Gastrocnemius medialis (tissue), 4 donors: ENCODE measurements at regions of chr2 and their contacts with region 1.

Region 1: DNA sequence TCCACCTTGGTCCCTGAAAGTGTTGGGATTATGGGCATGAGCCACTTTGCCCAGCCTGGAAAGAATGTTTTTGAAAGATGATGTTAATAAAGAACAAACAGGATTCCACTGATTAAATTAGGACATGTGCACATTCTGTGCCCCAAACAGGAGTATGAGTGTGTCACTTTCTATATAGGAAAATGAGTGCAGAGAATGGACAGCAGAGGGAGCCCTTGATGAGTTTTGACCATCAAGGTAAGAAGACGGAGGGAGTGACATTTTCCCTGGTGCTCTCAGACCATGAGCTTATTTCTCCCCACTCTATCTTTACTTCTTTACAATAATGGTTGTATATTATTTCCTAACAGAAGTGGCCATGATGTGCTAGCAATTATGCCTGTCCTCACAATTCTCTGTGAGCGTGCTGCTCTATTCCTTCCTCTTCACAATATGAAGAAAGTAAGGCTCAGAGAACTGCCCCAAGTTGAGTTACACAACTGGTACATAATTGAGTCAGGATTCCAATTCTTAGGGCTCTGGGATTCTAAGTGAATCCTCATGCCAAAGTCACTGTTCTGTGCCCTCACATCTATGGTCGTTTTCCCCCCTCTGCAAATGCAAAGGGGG is 20.6 kb downstream of the RPL37A start:
- DNase-seq: peak; percentile 36 to 48
- ATAC-seq: peak; percentile 82 to 93
- H3K4me3 ChIP-seq: no peak overlapping the region
- H3K27ac ChIP-seq: no peak overlapping the region
- H3K4me1 ChIP-seq: peaks cover 0 to 4% of the 10 kb centered on the region in 2 donors
- H3K27me3 ChIP-seq: no peaks in the 10 kb centered on the region
- CTCF ChIP-seq: peak; percentile 69 to 79 (median 75)
- POLR2A ChIP-seq: no peak

Region 2: GRCh38 chr2:215880970-215881369 is 638.3 kb before region 1 on chr2:
- in situ Hi-C with region 1: no loop called
- intact Hi-C with region 1: no loop called
- DNase-seq: no peak
- ATAC-seq: peak in 1 of 2 donors; percentile 30
- H3K4me3 ChIP-seq: no peak overlapping the region
- H3K27ac ChIP-seq: no peak overlapping the region
- H3K4me1 ChIP-seq: peaks cover 0 to 15% of the 10 kb centered on the region in 2 donors
- H3K27me3 ChIP-seq: no peaks in the 10 kb centered on the region
- CTCF ChIP-seq: no peak
- POLR2A ChIP-seq: no peak

Region 3: DNA sequence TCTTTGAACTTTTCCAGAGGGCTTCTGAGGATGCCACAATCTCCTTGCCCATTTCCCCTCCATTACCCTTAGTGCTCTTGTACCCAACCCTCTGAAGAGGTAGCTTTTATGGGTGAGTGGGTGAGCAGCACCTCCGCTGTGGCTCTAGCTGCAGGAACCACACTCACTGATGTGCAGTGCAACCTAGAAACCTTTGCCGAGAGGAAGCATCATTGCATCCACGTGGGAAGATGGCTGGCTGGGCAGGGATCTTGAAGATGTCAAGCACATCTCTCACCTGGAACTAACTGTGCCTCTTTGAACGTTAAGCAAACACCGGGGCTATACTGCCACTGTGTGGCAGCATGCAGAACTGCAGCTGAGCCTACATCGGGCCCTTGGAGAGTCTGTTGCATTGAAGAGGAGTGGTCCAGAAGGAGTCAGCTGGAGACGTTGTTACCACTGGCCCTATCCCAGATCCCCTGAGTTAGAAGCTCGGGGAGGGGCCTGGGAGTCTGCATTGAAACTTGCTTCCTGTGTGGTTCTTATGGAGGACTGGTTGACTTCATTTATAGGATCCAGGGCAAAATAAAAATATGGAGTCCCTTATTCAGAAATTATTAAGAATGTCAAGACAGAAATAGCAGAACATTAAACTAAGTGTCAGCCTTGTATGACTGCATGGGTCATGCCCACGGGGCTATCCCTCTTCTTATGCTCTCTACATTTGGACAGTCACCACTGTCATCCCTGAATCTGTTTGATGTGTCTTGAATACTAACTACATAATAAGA is 147.4 kb after region 1 on chr2:
- in situ Hi-C with region 1: loop called (anchors 5 kb)
- intact Hi-C with region 1: loop called (anchors 1 kb)
- DNase-seq: peak in 1 of 2 donors; percentile 58
- ATAC-seq: peak; percentile 81 to 87
- H3K4me3 ChIP-seq: no peak overlapping the region
- H3K27ac ChIP-seq: no peak overlapping the region
- H3K4me1 ChIP-seq: peaks cover 0 to 4% of the 10 kb centered on the region in 2 donors
- H3K27me3 ChIP-seq: no peaks in the 10 kb centered on the region
- CTCF ChIP-seq: peak; percentile 94 to 98 (median 97)
- POLR2A ChIP-seq: no peak

Region 4: GRCh38 chr2:217729421-217730053 is 1210.3 kb after region 1 on chr2:
- in situ Hi-C with region 1: loop called in 1 of 4 experiments (anchors 25 kb)
- intact Hi-C with region 1: no loop called
- DNase-seq: no peak
- ATAC-seq: peak in 1 of 2 donors; percentile 3
- H3K4me3 ChIP-seq: no peak overlapping the region
- H3K27ac ChIP-seq: peak overlapping the region in 2 of 4 donors; percentile 3 to 22
- H3K4me1 ChIP-seq: peaks cover 19 to 24% of the 10 kb centered on the region in 2 donors
- H3K27me3 ChIP-seq: no peaks in the 10 kb centered on the region
- CTCF ChIP-seq: no peak
- POLR2A ChIP-seq: no peak